ENCODE measurements at regions of chr9 and their contacts with region 1.

Region 1: DNA sequence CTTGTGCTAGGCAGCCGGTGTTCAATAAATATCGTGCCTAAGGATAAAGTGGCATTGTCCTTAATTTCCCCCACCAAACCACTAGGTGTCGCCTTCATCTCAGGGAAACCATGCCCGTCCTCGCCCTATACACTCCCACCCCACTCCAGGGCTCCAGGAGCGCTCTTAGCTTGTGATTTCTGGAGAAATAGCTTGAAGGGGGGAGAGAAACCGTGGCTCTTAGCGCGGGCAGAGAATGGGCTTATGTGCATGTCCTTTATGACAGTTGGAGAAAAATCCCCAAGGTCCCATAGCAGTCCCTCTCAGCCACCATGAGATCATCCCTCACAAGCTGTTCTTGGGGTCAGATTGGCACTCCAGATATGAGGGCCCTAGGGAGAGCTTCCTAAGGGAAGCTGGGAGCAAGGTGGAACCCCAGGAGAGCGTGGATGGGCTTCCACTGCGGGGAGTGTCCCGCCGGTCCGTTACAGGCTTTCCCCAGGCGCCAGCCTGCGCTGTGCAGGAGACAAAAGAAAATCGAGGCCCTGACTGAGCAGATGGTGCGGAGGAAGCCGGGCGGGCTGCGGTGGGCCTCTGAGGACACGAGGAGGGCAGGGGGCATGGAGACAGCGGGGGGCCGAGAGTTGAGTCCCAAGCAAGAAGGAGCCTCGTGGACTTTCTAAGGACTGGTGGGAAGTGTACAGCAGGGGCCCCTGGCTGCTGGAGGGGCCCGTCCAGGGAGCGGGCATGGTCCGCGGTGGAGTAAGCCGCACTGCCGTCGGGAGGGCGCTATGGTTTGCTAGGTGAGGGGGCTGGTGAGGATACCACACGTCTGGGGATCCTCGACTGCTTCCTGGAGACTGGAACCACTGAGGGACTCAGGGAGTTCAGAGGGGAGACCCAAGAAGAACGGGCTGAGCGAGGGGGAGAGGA is 750 bp upstream of the NPR2 start:
- DNase-seq: peak; percentile 75 to 77
- H3K4me3 ChIP-seq: no peak overlapping the region
- H3K4me3 Mint-ChIP-seq: no peak overlapping the region
- H3K27ac Mint-ChIP-seq: no peak overlapping the region
- H3K4me1 ChIP-seq: peaks cover 8% of the 10 kb centered on the region; the same call in 1 of the 2 replicates
- H3K4me1 Mint-ChIP-seq: peaks cover 4% of the 10 kb centered on the region
- H3K27me3 ChIP-seq: no peaks in the 10 kb centered on the region
- H3K27me3 Mint-ChIP-seq: no peaks in the 10 kb centered on the region
- CTCF ChIP-seq: peak; percentile 80 to 81

Region 2: GRCh38 chr9:35801328-35802128 is 10.9 kb after region 1 on chr9:
- CTCF ChIA-PET with region 1: interaction called, 11 read pairs
- POLR2A ChIA-PET with region 1: no interaction called
- intact Hi-C with region 1: no loop called
- DNase-seq: peak; percentile 55 to 62
- H3K4me3 ChIP-seq: peak overlapping the region; percentile 6; the same call in 1 of the 2 replicates
- H3K4me3 Mint-ChIP-seq: peak overlapping the region; percentile 70
- H3K27ac Mint-ChIP-seq: peak overlapping the region; percentile 85
- H3K4me1 ChIP-seq: peaks cover 46% of the 10 kb centered on the region
- H3K4me1 Mint-ChIP-seq: peaks cover 29% of the 10 kb centered on the region
- H3K27me3 ChIP-seq: no peaks in the 10 kb centered on the region
- H3K27me3 Mint-ChIP-seq: no peaks in the 10 kb centered on the region
- CTCF ChIP-seq: no peak

Region 3: DNA sequence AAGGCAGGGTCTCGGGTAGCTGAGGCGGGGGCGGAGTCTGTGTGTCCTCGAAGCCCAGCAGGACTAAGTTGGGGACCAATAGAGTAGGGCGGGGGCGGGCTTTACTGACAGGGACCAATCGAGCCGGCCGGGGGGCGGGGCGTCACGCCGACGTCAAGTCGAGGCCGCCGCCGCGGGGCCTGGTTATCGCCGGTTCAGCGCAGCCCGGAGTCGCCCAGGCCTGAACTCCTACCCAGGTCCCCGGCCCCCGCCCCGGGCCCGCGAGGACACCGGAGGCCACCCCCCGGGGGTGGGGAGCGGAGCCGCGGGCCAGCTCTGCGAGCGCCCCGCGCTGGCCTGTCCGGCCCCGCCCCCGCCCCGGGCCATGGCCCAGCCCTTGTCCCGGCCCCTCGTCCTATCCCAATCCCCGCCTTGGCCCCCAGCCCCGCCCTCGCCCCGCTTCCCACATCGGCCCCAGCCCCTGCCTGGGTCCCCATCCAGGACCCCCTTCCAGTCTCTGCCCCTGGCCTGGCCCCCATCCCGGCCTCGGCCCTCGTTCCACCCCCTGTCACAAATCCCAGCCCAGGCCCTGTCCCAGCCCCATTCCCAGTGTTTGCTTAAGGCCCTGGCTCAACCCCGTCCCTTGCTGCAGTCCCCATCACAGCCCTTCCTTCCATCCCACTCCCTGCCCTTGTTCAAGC is 38.6 kb after region 1 on chr9 and contains the start of gene TMEM8B:
- CTCF ChIA-PET with region 1: interaction called, 62 read pairs
- POLR2A ChIA-PET with region 1: no interaction called
- intact Hi-C with region 1: loop called (anchors 1 kb)
- DNase-seq: peak; percentile 94 to 95
- H3K4me3 ChIP-seq: peak within 1 kb of the TSS; percentile 48
- H3K4me3 Mint-ChIP-seq: peak within 1 kb of the TSS; percentile 88
- H3K27ac Mint-ChIP-seq: peak within 1 kb of the TSS; percentile 88
- H3K4me1 ChIP-seq: peaks cover 4% of the 10 kb centered on the region; the same call in 1 of the 2 replicates
- H3K4me1 Mint-ChIP-seq: peaks cover 8% of the 10 kb centered on the region
- H3K27me3 ChIP-seq: no peaks in the 10 kb centered on the region
- H3K27me3 Mint-ChIP-seq: no peaks in the 10 kb centered on the region
- CTCF ChIP-seq: no peak
- total RNA-seq, gene TMEM8B: 4.8 and 4.9 TPM in 2 replicates

Region 4: DNA sequence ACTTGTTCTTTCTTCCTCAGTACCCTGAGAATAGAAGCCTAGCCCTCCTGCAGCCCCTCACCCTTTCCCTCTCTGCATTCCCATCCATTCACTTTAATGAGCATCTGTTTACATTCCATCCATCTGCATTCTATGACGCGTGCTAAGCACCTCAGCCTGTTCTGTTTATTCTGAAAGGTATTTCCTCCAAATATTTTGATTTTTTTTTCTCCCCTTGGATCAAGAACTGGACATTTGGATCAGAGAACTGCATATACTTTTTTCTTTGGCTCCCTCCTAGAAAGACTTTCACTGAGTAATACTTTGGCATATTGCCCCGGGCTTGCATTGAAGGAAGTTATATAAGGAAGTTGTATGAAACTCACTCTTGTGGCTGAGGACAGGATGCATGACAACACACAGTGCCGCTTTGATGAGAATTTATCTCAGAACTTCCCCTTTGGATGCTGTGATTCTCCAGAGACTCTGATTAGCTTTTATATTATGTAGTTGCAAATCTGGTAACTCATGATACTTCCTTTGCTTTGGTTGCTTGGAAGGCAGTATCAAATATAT is 54.2 kb after region 1 on chr9:
- CTCF ChIA-PET with region 1: no interaction called
- POLR2A ChIA-PET with region 1: no interaction called
- intact Hi-C with region 1: no loop called
- DNase-seq: no peak
- H3K4me3 ChIP-seq: no peak overlapping the region
- H3K4me3 Mint-ChIP-seq: no peak overlapping the region
- H3K27ac Mint-ChIP-seq: no peak overlapping the region
- H3K4me1 ChIP-seq: peaks cover 4% of the 10 kb centered on the region; the same call in 1 of the 2 replicates
- H3K4me1 Mint-ChIP-seq: peaks cover 15% of the 10 kb centered on the region
- H3K27me3 ChIP-seq: no peaks in the 10 kb centered on the region
- H3K27me3 Mint-ChIP-seq: no peaks in the 10 kb centered on the region
- CTCF ChIP-seq: no peak

Region 5: DNA sequence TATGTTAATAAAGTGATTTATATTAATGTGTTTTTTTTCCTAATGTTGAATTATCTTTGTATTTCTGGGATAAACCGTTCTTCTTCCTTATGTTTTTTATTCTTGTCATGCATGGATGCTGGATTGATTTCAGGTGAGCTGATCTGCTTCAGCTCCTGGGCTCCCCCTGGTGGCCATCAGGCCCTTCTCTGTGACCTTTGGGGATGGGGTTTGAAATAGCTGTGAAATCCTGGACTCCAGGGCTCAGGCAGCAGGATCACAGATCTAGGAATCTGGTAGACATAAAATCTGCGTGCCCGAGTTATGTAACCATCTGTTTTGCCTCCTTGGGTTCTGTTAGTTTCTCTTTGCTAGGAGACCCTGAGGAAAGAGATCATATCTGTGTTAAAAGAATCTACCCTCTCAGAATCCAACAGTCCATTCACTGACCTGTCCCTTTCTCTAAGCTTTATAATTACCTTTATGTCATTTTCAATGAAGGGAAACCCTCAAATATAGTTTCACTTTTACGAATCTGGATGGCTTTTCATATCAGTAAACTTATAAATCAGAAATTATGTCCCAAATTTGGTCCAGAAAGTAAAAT is 91.7 kb after region 1 on chr9:
- CTCF ChIA-PET with region 1: interaction called, 95 read pairs
- POLR2A ChIA-PET with region 1: interaction called, 4 read pairs
- intact Hi-C with region 1: loop called (anchors 1 kb)
- DNase-seq: peak; percentile 76 to 86
- H3K4me3 ChIP-seq: no peak overlapping the region
- H3K4me3 Mint-ChIP-seq: no peak overlapping the region
- H3K27ac Mint-ChIP-seq: no peak overlapping the region
- H3K4me1 ChIP-seq: no peaks in the 10 kb centered on the region
- H3K4me1 Mint-ChIP-seq: no peaks in the 10 kb centered on the region
- H3K27me3 ChIP-seq: no peaks in the 10 kb centered on the region
- H3K27me3 Mint-ChIP-seq: peaks cover 4% of the 10 kb centered on the region
- CTCF ChIP-seq: peak; percentile 93 to 97

Region 6: DNA sequence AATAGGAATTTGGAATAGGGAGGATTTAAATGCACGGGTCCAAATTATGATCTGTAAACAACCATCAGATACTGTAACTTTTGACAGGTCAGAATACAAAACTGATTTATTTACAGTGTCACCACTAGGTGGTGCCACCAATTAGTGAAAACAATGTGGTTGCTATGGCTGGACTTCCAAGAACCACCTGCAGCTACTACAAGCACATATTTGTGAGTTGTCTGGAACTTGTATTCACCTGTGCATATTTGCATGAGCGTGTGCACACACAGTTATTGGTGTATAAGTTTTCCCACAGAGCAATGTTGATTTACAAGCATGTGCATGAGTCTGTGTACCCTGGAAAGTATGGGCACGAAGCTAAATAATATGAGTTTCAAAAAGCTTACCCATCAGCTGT is 112.4 kb after region 1 on chr9:
- CTCF ChIA-PET with region 1: interaction called, 11 read pairs
- POLR2A ChIA-PET with region 1: no interaction called
- intact Hi-C with region 1: no loop called
- DNase-seq: peak; percentile 58 to 71
- H3K4me3 ChIP-seq: no peak overlapping the region
- H3K4me3 Mint-ChIP-seq: no peak overlapping the region
- H3K27ac Mint-ChIP-seq: peak overlapping the region; percentile 32
- H3K4me1 ChIP-seq: peaks cover 26% of the 10 kb centered on the region
- H3K4me1 Mint-ChIP-seq: peaks cover 11% of the 10 kb centered on the region
- H3K27me3 ChIP-seq: no peaks in the 10 kb centered on the region
- H3K27me3 Mint-ChIP-seq: peaks cover 6% of the 10 kb centered on the region
- CTCF ChIP-seq: peak; percentile 55 to 76

Measured in Caco-2 (cell line).